Ovary (tissue), 10 donors: ENCODE measurements at regions of chr22 and their contacts with region 1.

Region 1: DNA sequence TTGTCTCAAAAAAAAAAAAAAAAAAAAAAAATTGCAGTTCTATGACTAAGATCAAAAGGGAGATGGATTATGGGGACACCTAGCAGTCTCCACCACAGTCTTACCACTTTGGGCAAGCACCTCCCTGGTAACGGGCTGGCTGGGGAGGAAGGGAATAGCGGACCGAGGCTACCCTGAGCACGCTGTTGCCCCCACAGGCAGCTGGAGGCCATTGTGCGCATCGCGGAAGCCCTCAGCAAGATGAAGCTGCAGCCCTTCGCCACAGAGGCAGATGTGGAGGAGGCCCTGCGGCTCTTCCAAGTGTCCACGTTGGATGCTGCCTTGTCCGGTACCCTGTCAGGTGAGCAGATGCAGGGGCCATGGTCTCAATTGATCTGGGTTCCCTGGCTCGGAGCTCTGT is 21.2 kb downstream of the MCM5 start:
- DNase-seq: no peak
- H3K4me3 ChIP-seq: no peak overlapping the region
- H3K27ac ChIP-seq: no peak overlapping the region
- H3K4me1 ChIP-seq: no peaks in the 10 kb centered on the region
- H3K27me3 ChIP-seq: no peaks in the 10 kb centered on the region
- CTCF ChIP-seq: no peak
- EP300 ChIP-seq: no peak
- POLR2A ChIP-seq: no peak

Region 2: DNA sequence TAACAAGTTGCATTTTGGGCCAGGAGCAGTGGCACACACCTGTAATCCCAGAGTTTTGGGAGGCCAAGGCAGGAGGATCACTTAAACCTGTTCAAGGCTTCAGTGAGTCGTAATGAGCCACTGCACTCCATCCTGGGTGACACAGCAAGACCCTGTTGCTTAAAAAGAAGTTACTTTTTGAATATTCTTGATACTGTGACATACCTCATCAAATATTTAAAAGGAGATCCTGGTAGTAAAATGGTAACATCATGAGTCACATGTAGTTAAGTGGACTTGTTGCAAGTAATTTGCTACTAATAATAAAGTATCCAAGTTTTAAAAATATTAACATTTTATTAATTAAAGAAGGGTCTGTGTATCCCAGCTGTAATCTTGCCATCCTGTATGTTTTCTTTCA is 145.5 kb before region 1 on chr22:
- intact Hi-C with region 1: no loop called
- DNase-seq: no peak
- H3K4me3 ChIP-seq: no peak overlapping the region
- H3K27ac ChIP-seq: no peak overlapping the region
- H3K4me1 ChIP-seq: no peaks in the 10 kb centered on the region
- H3K27me3 ChIP-seq: no peaks in the 10 kb centered on the region
- CTCF ChIP-seq: no peak
- EP300 ChIP-seq: no peak
- POLR2A ChIP-seq: no peak

Region 3: DNA sequence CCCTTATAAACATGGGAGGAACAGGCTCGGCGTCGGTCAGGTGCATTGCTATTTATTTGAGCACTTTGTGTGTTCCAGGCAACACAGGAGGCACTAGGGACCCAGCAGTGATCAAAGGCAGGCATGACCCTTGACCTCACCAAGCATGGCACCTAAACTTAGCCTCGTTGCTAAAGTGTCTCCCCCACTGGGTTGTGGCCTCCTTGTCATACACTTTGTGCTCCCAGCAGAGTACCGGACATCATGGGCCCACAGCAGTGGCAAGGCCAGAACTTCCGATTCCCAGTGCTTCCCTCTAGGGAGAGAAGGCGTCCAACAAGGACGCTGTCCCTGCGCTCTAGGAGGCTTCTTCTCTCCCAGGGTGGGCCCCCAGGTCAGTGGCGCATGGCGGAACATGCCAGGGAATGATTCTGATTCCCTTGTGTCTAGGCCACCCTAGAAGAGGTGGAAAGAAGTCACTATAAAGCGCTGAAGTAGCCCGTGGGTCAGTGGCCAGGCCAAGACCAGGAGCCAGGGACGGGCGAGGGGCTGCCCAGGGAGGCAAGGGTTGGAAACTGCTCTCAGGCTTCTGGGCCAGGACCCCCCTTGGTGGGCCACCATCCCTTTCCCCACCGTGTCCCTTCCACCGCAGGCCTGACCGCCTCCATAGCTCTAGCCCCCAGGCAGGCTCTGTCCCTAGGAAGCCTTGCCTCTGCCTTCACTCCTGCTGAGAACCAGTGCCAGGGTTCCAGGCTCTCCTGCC is 101.7 kb before region 1 on chr22:
- intact Hi-C with region 1: no loop called
- DNase-seq: peak in 2 of 5 donors; percentile 15 to 17
- H3K4me3 ChIP-seq: no peak overlapping the region
- H3K27ac ChIP-seq: no peak overlapping the region
- H3K4me1 ChIP-seq: no peaks in the 10 kb centered on the region
- H3K27me3 ChIP-seq: no peaks in the 10 kb centered on the region
- CTCF ChIP-seq: no peak
- EP300 ChIP-seq: no peak
- POLR2A ChIP-seq: no peak

Region 4: GRCh38 chr22:35510481-35510934 is 89.4 kb after region 1 on chr22:
- intact Hi-C with region 1: no loop called
- DNase-seq: no peak
- H3K4me3 ChIP-seq: no peak overlapping the region
- H3K27ac ChIP-seq: no peak overlapping the region
- H3K4me1 ChIP-seq: no peaks in the 10 kb centered on the region
- H3K27me3 ChIP-seq: no peaks in the 10 kb centered on the region
- CTCF ChIP-seq: no peak
- EP300 ChIP-seq: no peak
- POLR2A ChIP-seq: no peak

Region 5: GRCh38 chr22:35582861-35583670 is 161.9 kb after region 1 on chr22:
- intact Hi-C with region 1: loop called in 2 of 4 experiments (anchors 5 kb)
- DNase-seq: peak; percentile 43 to 73 (median 68)
- H3K4me3 ChIP-seq: no peak overlapping the region
- H3K27ac ChIP-seq: no peak overlapping the region
- H3K4me1 ChIP-seq: no peaks in the 10 kb centered on the region
- H3K27me3 ChIP-seq: no peaks in the 10 kb centered on the region
- CTCF ChIP-seq: peak; percentile 83 to 92 (median 88)
- EP300 ChIP-seq: no peak
- POLR2A ChIP-seq: no peak